ENCODE measurements at regions of chr19 and their contacts with region 1.

Region 1: GRCh38 chr19:7381073-7381390 is 32.3 kb downstream of the ARHGEF18 start:
- DNase-seq: no peak
- ATAC-seq: no peak
- H3K4me3 Mint-ChIP-seq: no peak overlapping the region
- H3K27ac Mint-ChIP-seq: no peak overlapping the region
- H3K4me1 Mint-ChIP-seq: peaks cover 3% of the 10 kb centered on the region
- H3K27me3 Mint-ChIP-seq: no peaks in the 10 kb centered on the region

Region 2: GRCh38 chr19:7366701-7367420 is 14.2 kb before region 1 on chr19:
- CTCF ChIA-PET with region 1: interaction called, 18 read pairs
- POLR2A ChIA-PET with region 1: interaction called, 3 read pairs
- DNase-seq: peak; percentile 54
- ATAC-seq: peak; percentile 67
- H3K4me3 Mint-ChIP-seq: no peak overlapping the region
- H3K27ac Mint-ChIP-seq: no peak overlapping the region
- H3K4me1 Mint-ChIP-seq: no peaks in the 10 kb centered on the region
- H3K27me3 Mint-ChIP-seq: no peaks in the 10 kb centered on the region

Measured in activated CD8-positive, alpha-beta T cell treated with anti-CD3 and anti-CD28 coated beads, Interleukin-2, amount 10 ng/mL, durations not matched to agents 7 days and 5 days (primary cell).